AG04450 (cell line): ENCODE measurements at regions of chr2 and their contacts with region 1.

Region 1: DNA sequence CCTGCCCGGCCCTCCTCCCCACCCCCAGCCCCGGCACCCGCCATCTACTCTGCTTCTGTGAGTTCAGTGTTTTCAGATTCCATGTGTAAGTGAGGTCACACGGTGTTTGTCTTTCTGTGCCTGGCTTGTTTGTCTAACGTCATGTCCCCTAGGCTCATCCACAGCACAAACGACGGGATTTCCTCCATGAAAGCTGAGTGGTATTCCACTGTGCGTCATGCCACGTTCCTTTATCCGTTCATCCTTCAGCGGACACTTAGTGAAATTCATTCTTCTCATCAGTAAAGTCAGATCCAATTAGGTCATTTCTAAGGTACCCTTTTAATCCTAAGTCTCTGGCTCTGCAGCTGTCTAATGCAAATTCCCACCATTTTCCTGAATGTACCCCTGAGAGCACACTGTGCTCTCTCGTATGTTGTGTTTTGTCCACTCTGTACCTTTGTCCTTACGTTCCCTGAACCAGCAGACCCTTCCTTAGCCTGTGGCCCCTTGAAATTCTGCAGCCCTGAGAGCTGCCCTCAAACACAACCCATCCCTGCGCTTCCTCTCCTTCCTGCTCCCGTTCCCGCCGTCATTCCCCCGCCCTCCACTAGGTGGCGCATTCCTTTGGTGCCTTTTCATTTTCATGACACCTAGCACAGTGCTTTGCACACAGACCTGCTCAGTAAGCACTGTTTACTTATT is 44.1 kb downstream of the TRAPPC12 start:
- DNase-seq: no peak
- H3K4me3 ChIP-seq: no peak overlapping the region
- H3K27ac ChIP-seq: no peak overlapping the region
- H3K27me3 ChIP-seq: no peaks in the 10 kb centered on the region
- CTCF ChIP-seq: peak; percentile 98

Region 2: GRCh38 chr2:3386448-3386958 is 37.1 kb before region 1 on chr2:
- CTCF ChIA-PET with region 1: interaction called, 39 read pairs
- POLR2A ChIA-PET with region 1: no interaction called
- DNase-seq: no peak
- H3K4me3 ChIP-seq: no peak overlapping the region; the same call in 1 of the 2 replicates
- H3K27ac ChIP-seq: peak overlapping the region; percentile 74
- H3K27me3 ChIP-seq: no peaks in the 10 kb centered on the region
- CTCF ChIP-seq: no peak

Region 3: DNA sequence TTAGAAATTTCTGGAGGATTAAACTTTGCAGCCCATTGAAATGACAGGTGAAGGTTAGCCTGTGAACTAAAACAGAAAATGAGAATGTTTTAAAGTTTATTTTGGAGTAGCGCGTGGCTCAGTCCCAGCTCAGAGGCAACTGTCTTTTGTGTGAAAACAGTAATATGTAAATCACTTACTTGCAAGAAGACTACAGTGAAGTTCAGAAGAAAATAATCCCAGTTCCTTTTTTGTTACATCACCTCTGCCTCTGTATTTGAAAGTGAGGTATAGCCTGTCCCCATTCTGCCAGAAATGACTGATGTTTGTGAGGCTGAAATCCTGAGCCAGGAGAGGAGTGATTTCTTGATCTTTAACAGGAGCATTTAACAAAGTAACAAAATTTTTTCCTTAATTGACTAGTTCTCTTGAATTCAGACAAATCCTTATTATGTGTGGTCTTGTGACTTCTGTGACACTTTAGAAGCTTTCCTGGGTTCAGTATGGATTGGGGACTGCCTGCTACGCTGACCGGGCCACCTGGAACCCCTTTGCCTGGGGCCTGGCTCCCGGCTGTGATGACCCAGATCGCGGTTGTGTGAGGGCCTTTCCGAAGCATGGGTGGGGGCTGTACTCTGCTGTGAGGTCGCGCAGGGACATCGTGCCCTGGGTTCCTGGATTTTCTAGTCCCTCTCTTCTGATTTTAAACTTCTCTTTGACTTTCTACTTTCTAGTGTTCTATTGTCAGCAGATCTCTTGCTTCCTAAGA is 19.9 kb before region 1 on chr2:
- CTCF ChIA-PET with region 1: interaction called, 31 read pairs
- POLR2A ChIA-PET with region 1: no interaction called
- DNase-seq: no peak
- H3K4me3 ChIP-seq: no peak overlapping the region
- H3K27ac ChIP-seq: no peak overlapping the region
- H3K27me3 ChIP-seq: no peaks in the 10 kb centered on the region
- CTCF ChIP-seq: no peak

Region 4: DNA sequence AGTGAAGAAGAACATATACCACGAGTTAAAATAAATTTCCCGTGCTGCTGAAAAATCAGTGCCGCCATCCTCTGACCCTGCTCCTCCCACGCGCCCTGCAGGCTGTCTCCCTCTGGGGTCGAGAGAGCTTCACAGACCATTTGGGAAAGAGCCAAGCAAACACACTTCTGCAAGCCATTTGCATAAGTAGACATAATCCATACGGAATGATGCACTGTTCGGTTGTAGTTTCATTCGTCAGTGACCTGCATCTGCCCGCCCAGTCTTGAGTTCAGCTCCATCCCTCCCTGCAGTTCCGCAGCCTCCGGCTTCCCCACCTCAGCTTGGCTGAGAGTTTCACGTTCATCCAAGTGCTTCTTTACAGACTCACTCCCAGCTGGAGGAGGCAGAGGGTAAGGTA is 25.5 kb after region 1 on chr2:
- CTCF ChIA-PET with region 1: interaction called, 66 read pairs
- POLR2A ChIA-PET with region 1: no interaction called
- DNase-seq: no peak
- H3K4me3 ChIP-seq: no peak overlapping the region
- H3K27ac ChIP-seq: no peak overlapping the region
- H3K27me3 ChIP-seq: no peaks in the 10 kb centered on the region
- CTCF ChIP-seq: no peak

Region 5: GRCh38 chr2:3651691-3652648 is 228.3 kb after region 1 on chr2:
- CTCF ChIA-PET with region 1: interaction called, 19 read pairs
- POLR2A ChIA-PET with region 1: no interaction called
- DNase-seq: no peak
- H3K4me3 ChIP-seq: no peak overlapping the region
- H3K27ac ChIP-seq: peak overlapping the region; percentile 21
- H3K27me3 ChIP-seq: peaks cover 3% of the 10 kb centered on the region
- CTCF ChIP-seq: no peak